ENCODE measurements at regions of chr9 and their contacts with region 1.

Region 1: GRCh38 chr9:124537926-124538325 is 30.7 kb upstream of the NR5A1 start:
- DNase-seq: peak in 3 of 4 experiments; percentile 23 to 45 (median 31)
- ATAC-seq: no peak
- H3K4me3 ChIP-seq: no peak overlapping the region
- H3K27ac ChIP-seq: no peak overlapping the region
- H3K4me1 ChIP-seq: peaks cover 0 to 4% of the 10 kb centered on the region in 2 experiments; a peak in 3 of 5 replicates
- H3K27me3 ChIP-seq: no peaks in the 10 kb centered on the region
- CTCF ChIP-seq: no peak
- EP300 ChIP-seq: no peak
- POLR2A ChIP-seq: no peak
- RAD21 ChIP-seq: no peak

Region 2: GRCh38 chr9:124420991-124421543 is 116.9 kb before region 1 on chr9:
- CTCF ChIA-PET with region 1: interaction called, 29 read pairs
- POLR2A ChIA-PET with region 1: no interaction called
- in situ Hi-C with region 1: no loop called
- intact Hi-C with region 1: loop called (anchors 1 kb)
- DNase-seq: no peak
- ATAC-seq: no peak
- H3K4me3 ChIP-seq: no peak overlapping the region
- H3K27ac ChIP-seq: no peak overlapping the region
- H3K4me1 ChIP-seq: peaks cover 7 to 16% of the 10 kb centered on the region in 2 experiments; a peak in 4 of 5 replicates
- H3K27me3 ChIP-seq: peaks cover 0 to 8% of the 10 kb centered on the region in 2 experiments; a peak in 2 of 5 replicates
- CTCF ChIP-seq: no peak
- EP300 ChIP-seq: no peak
- POLR2A ChIP-seq: no peak
- RAD21 ChIP-seq: no peak

Region 3: GRCh38 chr9:124480621-124480981 is 57.3 kb before region 1 on chr9:
- CTCF ChIA-PET with region 1: no interaction called
- POLR2A ChIA-PET with region 1: no interaction called
- in situ Hi-C with region 1: no loop called
- intact Hi-C with region 1: loop called (anchors 5 kb)
- DNase-seq: peak; percentile 72 to 80 (median 74)
- ATAC-seq: peak; percentile 86
- H3K4me3 ChIP-seq: no peak overlapping the region
- H3K27ac ChIP-seq: no peak overlapping the region
- H3K4me1 ChIP-seq: peaks cover 0 to 51% of the 10 kb centered on the region in 2 experiments; a peak in 3 of 5 replicates
- H3K27me3 ChIP-seq: peaks cover 16 to 74% of the 10 kb centered on the region in 2 experiments; a peak in 4 of 5 replicates
- CTCF ChIP-seq: peak; percentile 70 to 84 (median 77)
- EP300 ChIP-seq: no peak
- POLR2A ChIP-seq: no peak
- RAD21 ChIP-seq: peak in 1 of 2 experiments; percentile 63; a peak in 2 of 4 replicates

Region 4: DNA sequence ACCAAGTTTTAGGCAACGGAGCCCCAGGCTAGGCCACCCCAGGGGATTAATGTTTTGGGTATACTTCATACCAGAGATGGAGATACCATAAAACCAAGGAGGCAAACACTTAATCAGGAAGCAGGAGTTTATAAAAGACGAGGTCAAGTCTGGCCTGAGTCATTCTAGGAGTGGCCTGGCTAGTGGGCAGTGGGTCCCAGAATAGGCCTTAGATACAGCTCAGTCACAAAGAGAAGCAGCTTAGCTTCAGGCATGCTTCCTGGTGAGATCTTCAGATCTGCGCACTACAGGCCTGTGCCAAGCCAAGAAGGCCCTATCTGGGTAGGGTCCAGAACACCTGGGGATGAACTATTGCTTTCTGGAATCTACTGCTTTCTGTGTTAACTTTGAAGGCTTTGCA is 10.1 kb before region 1 on chr9:
- CTCF ChIA-PET with region 1: no interaction called
- POLR2A ChIA-PET with region 1: interaction called, 13 read pairs
- in situ Hi-C with region 1: no loop called
- intact Hi-C with region 1: no loop called
- DNase-seq: no peak
- ATAC-seq: no peak
- H3K4me3 ChIP-seq: no peak overlapping the region
- H3K27ac ChIP-seq: peak overlapping the region; percentile 26; the same call in 1 of the 3 replicates
- H3K4me1 ChIP-seq: no peaks in the 10 kb centered on the region; a peak in 1 of 5 replicates
- H3K27me3 ChIP-seq: no peaks in the 10 kb centered on the region
- CTCF ChIP-seq: no peak
- EP300 ChIP-seq: no peak
- POLR2A ChIP-seq: no peak
- RAD21 ChIP-seq: no peak

Measured in K562 (cell line).